Naive thymus-derived CD4-positive, alpha-beta T cell (primary cell): ENCODE measurements at regions of chr18 and their contacts with region 1.

Region 1: GRCh38 chr18:62982600-62983251 is 267.4 kb downstream of the PHLPP1 start:
- DNase-seq: peak in 8 of 9 donors; percentile 29 to 60 (median 52)
- ATAC-seq: peak; percentile 70
- H3K4me3 ChIP-seq: peak overlapping the region; percentile 11
- H3K4me3 Mint-ChIP-seq: peak overlapping the region in 8 of 10 donors; percentile 33 to 78 (median 60)
- H3K27ac ChIP-seq: no peak overlapping the region
- H3K27ac Mint-ChIP-seq: peak overlapping the region in 1 of 9 donors; percentile 80
- H3K4me1 ChIP-seq: no peaks in the 10 kb centered on the region
- H3K4me1 Mint-ChIP-seq: peaks cover 0 to 7% (median 5%) of the 10 kb centered on the region in 7 donors
- H3K27me3 ChIP-seq: no peaks in the 10 kb centered on the region
- H3K27me3 Mint-ChIP-seq: peaks cover 0 to 2% (median 0%) of the 10 kb centered on the region in 5 donors

Region 2: GRCh38 chr18:62324917-62325805 is 657.6 kb before region 1 on chr18 and contains the start of gene TNFRSF11A:
- CTCF ChIA-PET with region 1: no interaction called
- POLR2A ChIA-PET with region 1: no interaction called
- intact Hi-C with region 1: loop called in 1 of 2 experiments (anchors 2 kb)
- DNase-seq: peak; percentile 19 to 83 (median 46)
- ATAC-seq: peak; percentile 91
- H3K4me3 ChIP-seq: peak within 1 kb of the TSS; percentile 50
- H3K4me3 Mint-ChIP-seq: peak within 1 kb of the TSS; percentile 80 to 93 (median 84)
- H3K27ac ChIP-seq: no peak within 1 kb of the TSS
- H3K27ac Mint-ChIP-seq: peak within 1 kb of the TSS in 5 of 9 donors; percentile 15 to 73 (median 65)
- H3K4me1 ChIP-seq: peaks cover 14 to 17% of the 10 kb centered on the region in 2 donors
- H3K4me1 Mint-ChIP-seq: peaks cover 18 to 53% (median 34%) of the 10 kb centered on the region in 7 donors
- H3K27me3 ChIP-seq: peaks cover 12 to 20% of the 10 kb centered on the region in 2 donors
- H3K27me3 Mint-ChIP-seq: peaks cover 46 to 78% (median 70%) of the 10 kb centered on the region in 5 donors
- total RNA-seq, gene TNFRSF11A: 0.16 to 22.2 (median 0.68) TPM

Region 3: GRCh38 chr18:62447652-62448051 is 535.1 kb before region 1 on chr18:
- CTCF ChIA-PET with region 1: no interaction called
- POLR2A ChIA-PET with region 1: no interaction called
- intact Hi-C with region 1: loop called in 1 of 2 experiments (anchors 1 kb)
- DNase-seq: no peak
- ATAC-seq: no peak
- H3K4me3 ChIP-seq: no peak overlapping the region
- H3K4me3 Mint-ChIP-seq: no peak overlapping the region
- H3K27ac ChIP-seq: no peak overlapping the region
- H3K27ac Mint-ChIP-seq: no peak overlapping the region
- H3K4me1 ChIP-seq: no peaks in the 10 kb centered on the region
- H3K4me1 Mint-ChIP-seq: peaks cover 0 to 12% (median 0%) of the 10 kb centered on the region in 7 donors
- H3K27me3 ChIP-seq: no peaks in the 10 kb centered on the region
- H3K27me3 Mint-ChIP-seq: peaks cover 0 to 2% (median 0%) of the 10 kb centered on the region in 5 donors

Region 4: GRCh38 chr18:62637807-62638687 is 344.7 kb before region 1 on chr18:
- CTCF ChIA-PET with region 1: no interaction called
- POLR2A ChIA-PET with region 1: no interaction called
- intact Hi-C with region 1: loop called in 1 of 2 experiments (anchors 1 kb)
- DNase-seq: peak; percentile 7 to 49 (median 27)
- ATAC-seq: peak; percentile 76
- H3K4me3 ChIP-seq: no peak overlapping the region
- H3K4me3 Mint-ChIP-seq: no peak overlapping the region
- H3K27ac ChIP-seq: no peak overlapping the region
- H3K27ac Mint-ChIP-seq: no peak overlapping the region
- H3K4me1 ChIP-seq: no peaks in the 10 kb centered on the region
- H3K4me1 Mint-ChIP-seq: peaks cover 0 to 14% (median 0%) of the 10 kb centered on the region in 7 donors
- H3K27me3 ChIP-seq: no peaks in the 10 kb centered on the region
- H3K27me3 Mint-ChIP-seq: peaks cover 18 to 30% (median 24%) of the 10 kb centered on the region in 5 donors

Region 5: DNA sequence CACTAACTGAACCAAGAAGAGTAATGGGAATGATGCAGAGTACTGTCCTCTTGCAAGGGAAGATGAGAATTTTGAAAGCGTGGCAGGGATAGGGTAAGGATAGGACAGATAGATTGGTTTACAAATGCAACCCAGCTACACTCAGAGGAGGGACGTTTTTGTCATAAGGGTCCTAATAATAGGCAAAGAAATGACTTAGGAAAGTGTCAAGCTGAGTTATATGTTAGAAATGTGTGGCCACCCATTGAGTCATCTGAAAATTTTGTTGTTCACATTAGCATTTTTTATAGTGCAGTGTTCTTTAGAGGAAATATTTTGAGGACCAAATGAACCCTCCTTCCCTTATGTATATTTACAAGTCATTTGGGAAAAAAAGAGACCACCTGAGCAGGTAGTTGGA is 129.9 kb before region 1 on chr18:
- CTCF ChIA-PET with region 1: no interaction called
- POLR2A ChIA-PET with region 1: no interaction called
- intact Hi-C with region 1: no loop called
- DNase-seq: no peak
- ATAC-seq: no peak
- H3K4me3 ChIP-seq: no peak overlapping the region
- H3K4me3 Mint-ChIP-seq: no peak overlapping the region
- H3K27ac ChIP-seq: no peak overlapping the region
- H3K27ac Mint-ChIP-seq: peak overlapping the region in 1 of 9 donors; percentile 53
- H3K4me1 ChIP-seq: no peaks in the 10 kb centered on the region
- H3K4me1 Mint-ChIP-seq: peaks cover 0 to 3% (median 0%) of the 10 kb centered on the region in 7 donors
- H3K27me3 ChIP-seq: no peaks in the 10 kb centered on the region
- H3K27me3 Mint-ChIP-seq: no peaks in the 10 kb centered on the region